HCT116 (cell line): ENCODE measurements at regions of chr12 and their contacts with region 1.

Region 1: GRCh38 chr12:47032644-47033043 is 46.8 kb upstream of the PCED1B start:
- DNase-seq: peak; percentile 36
- ATAC-seq: peak; percentile 77
- H3K4me3 ChIP-seq: no peak overlapping the region
- H3K27ac ChIP-seq: no peak overlapping the region
- H3K4me1 ChIP-seq: peaks cover 3 to 6% of the 10 kb centered on the region in 2 experiments; a peak in 3 of 4 replicates
- H3K27me3 ChIP-seq: no peaks in the 10 kb centered on the region
- CTCF ChIP-seq: peak; percentile 38 to 89 (median 66); a peak in 5 of 6 replicates
- POLR2A ChIP-seq: no peak
- RAD21 ChIP-seq: peak; percentile 85

Region 2: GRCh38 chr12:47021298-47021697 is 11.3 kb before region 1 on chr12:
- CTCF ChIA-PET with region 1: interaction called, 13 read pairs
- POLR2A ChIA-PET with region 1: no interaction called
- RAD21 ChIA-PET with region 1: no interaction called
- intact Hi-C with region 1: no loop called
- DNase-seq: peak; percentile 90
- ATAC-seq: peak; percentile 98
- H3K4me3 ChIP-seq: no peak overlapping the region
- H3K27ac ChIP-seq: no peak overlapping the region
- H3K4me1 ChIP-seq: peaks cover 0 to 17% of the 10 kb centered on the region in 2 experiments; a peak in 3 of 4 replicates
- H3K27me3 ChIP-seq: no peaks in the 10 kb centered on the region
- CTCF ChIP-seq: peak; percentile 52 to 81 (median 72); a peak in 5 of 6 replicates
- POLR2A ChIP-seq: no peak
- RAD21 ChIP-seq: peak; percentile 91

Region 3: DNA sequence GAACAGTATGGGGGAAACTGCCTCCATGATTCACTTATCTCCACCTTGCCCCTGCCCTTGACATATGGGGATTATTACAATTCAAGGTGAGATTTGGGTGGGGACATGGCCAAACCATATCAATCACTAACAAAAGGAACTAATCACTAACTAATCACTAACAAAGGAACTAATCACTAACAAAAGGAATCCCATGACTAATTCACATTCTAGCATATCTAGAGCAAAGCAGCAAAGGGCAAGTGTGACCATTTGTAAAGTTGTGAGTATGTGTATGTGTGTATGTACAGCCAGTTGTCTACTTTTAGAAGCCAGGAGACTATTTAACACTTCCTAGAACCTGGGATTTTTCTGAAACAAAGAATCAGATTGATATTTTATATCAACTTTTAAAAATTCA is 15.9 kb after region 1 on chr12:
- CTCF ChIA-PET with region 1: no interaction called
- POLR2A ChIA-PET with region 1: no interaction called
- RAD21 ChIA-PET with region 1: no interaction called
- intact Hi-C with region 1: no loop called
- DNase-seq: no peak
- ATAC-seq: no peak
- H3K4me3 ChIP-seq: no peak overlapping the region
- H3K27ac ChIP-seq: no peak overlapping the region
- H3K4me1 ChIP-seq: no peaks in the 10 kb centered on the region
- H3K27me3 ChIP-seq: no peaks in the 10 kb centered on the region
- CTCF ChIP-seq: no peak
- POLR2A ChIP-seq: no peak
- RAD21 ChIP-seq: no peak

Region 4: GRCh38 chr12:47307680-47308399 is 275.2 kb after region 1 on chr12:
- CTCF ChIA-PET with region 1: interaction called, 35 read pairs
- POLR2A ChIA-PET with region 1: no interaction called
- RAD21 ChIA-PET with region 1: interaction called, 3 to 4 read pairs
- intact Hi-C with region 1: loop called (anchors 1 kb)
- DNase-seq: peak; percentile 49
- ATAC-seq: peak; percentile 100
- H3K4me3 ChIP-seq: no peak overlapping the region
- H3K27ac ChIP-seq: no peak overlapping the region
- H3K4me1 ChIP-seq: peaks cover 0 to 3% of the 10 kb centered on the region in 2 experiments; a peak in 1 of 4 replicates
- H3K27me3 ChIP-seq: no peaks in the 10 kb centered on the region
- CTCF ChIP-seq: peak; percentile 70 to 84 (median 79)
- POLR2A ChIP-seq: no peak
- RAD21 ChIP-seq: peak; percentile 95

Region 5: GRCh38 chr12:47408171-47408871 is 375.7 kb after region 1 on chr12:
- CTCF ChIA-PET with region 1: interaction called, 35 read pairs
- POLR2A ChIA-PET with region 1: interaction called, 3 read pairs
- RAD21 ChIA-PET with region 1: interaction called, 3 to 7 read pairs
- intact Hi-C with region 1: no loop called
- DNase-seq: peak; percentile 19
- ATAC-seq: peak; percentile 94
- H3K4me3 ChIP-seq: no peak overlapping the region
- H3K27ac ChIP-seq: no peak overlapping the region
- H3K4me1 ChIP-seq: peaks cover 0 to 6% of the 10 kb centered on the region in 2 experiments; a peak in 1 of 4 replicates
- H3K27me3 ChIP-seq: no peaks in the 10 kb centered on the region
- CTCF ChIP-seq: peak; percentile 42 to 59 (median 56); a peak in 5 of 6 replicates
- POLR2A ChIP-seq: no peak
- RAD21 ChIP-seq: peak; percentile 69

Region 6: GRCh38 chr12:47636908-47637780 is 604.5 kb after region 1 on chr12:
- CTCF ChIA-PET with region 1: interaction called, 18 read pairs
- POLR2A ChIA-PET with region 1: no interaction called
- RAD21 ChIA-PET with region 1: interaction called in 1 of 2 experiments, 5 read pairs
- intact Hi-C with region 1: loop called (anchors 1 kb)
- DNase-seq: peak; percentile 69
- ATAC-seq: peak; percentile 98
- H3K4me3 ChIP-seq: no peak overlapping the region
- H3K27ac ChIP-seq: peak overlapping the region; percentile 52
- H3K4me1 ChIP-seq: peaks cover 7 to 12% of the 10 kb centered on the region in 2 experiments; a peak in 3 of 4 replicates
- H3K27me3 ChIP-seq: no peaks in the 10 kb centered on the region
- CTCF ChIP-seq: peak; percentile 62 to 88 (median 84)
- POLR2A ChIP-seq: no peak
- RAD21 ChIP-seq: peak; percentile 48; the same call in 1 of the 2 replicates

Region 7: DNA sequence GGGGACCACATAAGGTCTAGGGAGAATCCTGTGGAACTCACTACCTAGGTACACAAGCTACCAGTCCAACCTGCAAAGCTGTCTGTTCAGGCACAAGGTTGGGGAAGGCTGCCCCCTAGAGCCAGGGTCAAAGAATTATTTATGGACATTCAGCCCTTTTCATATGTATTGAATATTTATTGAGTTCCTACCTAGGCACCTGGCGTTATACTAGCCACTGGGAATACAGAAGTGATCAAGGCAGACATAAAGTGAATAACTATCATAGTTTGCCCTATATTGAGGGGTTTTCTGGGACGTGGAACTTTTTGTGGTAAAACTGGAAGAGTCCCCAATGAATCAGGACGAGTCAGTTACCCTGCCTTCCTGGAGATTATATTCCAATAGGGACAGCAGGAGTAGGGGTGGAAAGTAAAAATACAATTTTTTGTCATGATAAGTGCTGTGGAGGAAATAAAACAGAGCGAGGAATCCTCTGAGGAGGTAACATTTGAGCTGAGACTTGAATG is 734.6 kb after region 1 on chr12:
- CTCF ChIA-PET with region 1: interaction called, 11 read pairs
- POLR2A ChIA-PET with region 1: no interaction called
- RAD21 ChIA-PET with region 1: no interaction called
- intact Hi-C with region 1: loop called (anchors 10 kb)
- DNase-seq: peak; percentile 52
- ATAC-seq: peak; percentile 83
- H3K4me3 ChIP-seq: no peak overlapping the region
- H3K27ac ChIP-seq: no peak overlapping the region
- H3K4me1 ChIP-seq: peaks cover 12 to 24% of the 10 kb centered on the region in 2 experiments
- H3K27me3 ChIP-seq: no peaks in the 10 kb centered on the region
- CTCF ChIP-seq: peak; percentile 71 to 90 (median 71)
- POLR2A ChIP-seq: no peak
- RAD21 ChIP-seq: peak; percentile 90